ENCODE measurements at regions of chr10 and their contacts with region 1.

Region 1: DNA sequence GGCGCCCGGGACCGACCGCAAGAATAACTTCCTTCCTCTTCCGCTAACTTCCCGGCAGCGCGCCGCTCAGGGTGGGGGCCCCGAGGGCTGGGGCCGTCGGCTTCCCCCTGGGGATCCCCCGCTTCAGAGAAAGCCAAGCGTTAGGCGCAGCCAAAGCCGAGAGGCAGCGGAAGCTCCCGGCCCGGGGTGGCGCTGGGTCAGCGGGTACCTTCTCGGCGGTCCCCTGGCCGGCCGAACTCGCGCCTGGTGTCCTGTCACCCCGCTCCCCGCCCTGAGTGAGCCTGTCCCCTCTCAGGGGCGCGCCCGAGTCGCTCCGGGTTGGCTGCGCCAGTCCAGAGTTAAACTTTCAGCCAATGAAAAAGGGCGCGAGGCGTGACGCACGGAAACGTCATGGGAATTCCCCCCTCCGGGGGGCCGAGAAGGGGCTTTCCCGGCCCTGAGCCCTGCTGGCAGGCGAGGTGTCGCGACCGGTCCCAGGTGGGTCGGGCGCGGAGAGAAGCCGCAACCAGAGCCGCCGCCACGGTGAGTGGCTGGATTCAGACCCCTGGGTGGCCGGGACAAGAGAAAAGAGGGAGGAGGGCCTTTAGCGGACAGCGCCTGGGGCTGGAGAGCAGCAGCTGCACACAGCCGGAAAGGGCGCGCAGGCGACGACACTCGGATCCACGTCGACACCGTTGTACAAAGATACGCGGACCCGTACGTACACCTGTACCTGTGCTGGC is 1.3 kb upstream of the NFKB2 start:
- DNase-seq: peak; percentile 98
- H3K4me3 Mint-ChIP-seq: peak overlapping the region; percentile 92
- H3K27ac Mint-ChIP-seq: peak overlapping the region; percentile 96
- H3K4me1 Mint-ChIP-seq: peaks cover 45% of the 10 kb centered on the region
- H3K27me3 Mint-ChIP-seq: no peaks in the 10 kb centered on the region

Region 2: GRCh38 chr10:102384053-102384452 is 10.2 kb before region 1 on chr10:
- CTCF ChIA-PET with region 1: interaction called, 42 read pairs
- POLR2A ChIA-PET with region 1: no interaction called
- DNase-seq: no peak
- H3K4me3 Mint-ChIP-seq: no peak overlapping the region
- H3K27ac Mint-ChIP-seq: no peak overlapping the region
- H3K4me1 Mint-ChIP-seq: no peaks in the 10 kb centered on the region
- H3K27me3 Mint-ChIP-seq: no peaks in the 10 kb centered on the region

Region 3: DNA sequence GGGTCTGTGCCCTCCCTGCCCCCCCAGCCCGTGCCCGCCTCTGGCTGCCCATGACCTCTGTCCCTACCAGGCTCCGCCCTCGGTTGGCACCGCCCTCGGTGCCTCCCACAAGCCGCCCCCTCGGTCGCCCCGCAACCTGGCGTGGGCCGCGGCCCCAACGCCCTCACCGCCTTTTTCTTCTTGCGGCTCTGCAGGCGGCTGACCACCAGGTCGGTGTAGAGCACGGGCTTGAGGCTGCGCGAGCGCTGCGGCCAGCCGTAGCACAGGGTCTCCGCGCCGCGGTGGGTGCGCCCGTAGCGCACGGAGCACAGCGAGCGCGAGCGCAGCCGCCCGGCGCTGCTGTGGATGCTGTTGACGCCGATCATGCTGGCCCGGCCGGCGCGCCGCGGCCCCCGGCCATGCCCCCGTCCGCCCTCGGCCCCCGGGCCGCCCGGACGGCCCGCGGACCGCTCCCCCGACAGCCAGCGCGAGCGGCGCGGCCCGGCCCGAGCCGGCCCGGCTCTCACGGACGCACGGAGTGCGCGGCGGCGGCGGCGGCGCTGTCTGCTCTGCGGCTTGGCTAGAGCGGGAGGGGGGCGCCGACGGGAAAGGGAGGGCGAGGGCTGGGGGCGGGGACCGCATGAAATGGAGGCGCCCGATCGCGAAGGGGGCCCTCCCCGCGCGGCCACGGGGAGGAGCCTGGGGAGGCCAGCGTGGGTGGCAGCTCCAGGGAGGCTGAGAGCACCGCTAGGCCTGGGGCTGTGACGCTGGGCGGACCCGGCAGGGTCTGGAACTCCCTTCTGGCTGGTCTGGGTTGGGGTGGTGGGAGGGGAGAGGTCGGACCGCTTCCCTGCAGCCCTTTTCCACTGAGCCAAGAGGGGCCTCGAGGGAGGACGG is 14.7 kb after region 1 on chr10:
- CTCF ChIA-PET with region 1: interaction called, 65 read pairs
- POLR2A ChIA-PET with region 1: no interaction called
- DNase-seq: peak; percentile 51
- H3K4me3 Mint-ChIP-seq: peak overlapping the region; percentile 44
- H3K27ac Mint-ChIP-seq: no peak overlapping the region
- H3K4me1 Mint-ChIP-seq: peaks cover 31% of the 10 kb centered on the region
- H3K27me3 Mint-ChIP-seq: peaks cover 24% of the 10 kb centered on the region

Region 4: GRCh38 chr10:102420810-102421644 is 26.8 kb after region 1 on chr10 and contains the start of gene FBXL15:
- CTCF ChIA-PET with region 1: interaction called, 24 read pairs
- POLR2A ChIA-PET with region 1: no interaction called
- DNase-seq: peak; percentile 97
- H3K4me3 Mint-ChIP-seq: peak within 1 kb of the TSS; percentile 90
- H3K27ac Mint-ChIP-seq: peak within 1 kb of the TSS; percentile 95
- H3K4me1 Mint-ChIP-seq: peaks cover 37% of the 10 kb centered on the region
- H3K27me3 Mint-ChIP-seq: peaks cover 18% of the 10 kb centered on the region
- total RNA-seq, gene FBXL15: 8.7 to 11.2 TPM

Region 5: GRCh38 chr10:102432162-102432950 is 38.1 kb after region 1 on chr10 and contains the start of gene CUEDC2:
- CTCF ChIA-PET with region 1: interaction called, 15 read pairs
- POLR2A ChIA-PET with region 1: no interaction called
- DNase-seq: peak; percentile 97
- H3K4me3 Mint-ChIP-seq: peak within 1 kb of the TSS; percentile 94
- H3K27ac Mint-ChIP-seq: peak within 1 kb of the TSS; percentile 95
- H3K4me1 Mint-ChIP-seq: peaks cover 49% of the 10 kb centered on the region
- H3K27me3 Mint-ChIP-seq: no peaks in the 10 kb centered on the region
- total RNA-seq, gene CUEDC2: 63.6 to 68.9 TPM

Region 6: DNA sequence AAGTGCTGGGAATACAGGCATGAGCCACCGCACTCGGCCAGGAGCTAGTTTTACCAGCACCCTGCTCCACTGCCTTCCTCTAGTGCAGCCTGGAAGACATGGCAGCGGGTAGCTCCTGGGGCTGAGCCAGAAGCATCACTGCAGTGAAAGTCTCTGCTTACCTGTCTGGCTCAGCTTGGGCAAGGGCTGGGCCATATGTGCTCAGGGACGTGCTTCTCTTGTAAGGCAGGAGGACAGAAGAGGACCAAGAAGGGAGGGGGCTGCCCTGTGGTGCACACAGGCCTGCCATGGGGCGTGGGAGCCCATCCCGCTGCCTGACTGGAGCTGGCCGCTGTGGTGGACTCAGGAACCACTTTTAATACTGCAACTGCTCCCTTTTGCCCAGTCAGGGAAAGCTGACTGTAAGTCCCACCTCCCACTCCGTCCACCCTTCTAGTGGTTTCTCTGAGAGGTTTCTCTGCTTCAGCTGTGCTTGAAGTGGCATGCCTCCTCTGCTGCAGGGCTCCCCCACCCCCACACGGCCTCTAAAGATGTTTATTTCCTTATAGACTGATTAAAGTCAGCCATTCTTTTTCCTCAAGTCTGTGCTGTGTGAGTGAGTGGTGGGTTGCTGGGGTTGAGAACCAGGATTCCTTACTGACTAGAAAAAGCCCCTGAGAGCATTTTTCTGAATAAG is 82.4 kb after region 1 on chr10:
- CTCF ChIA-PET with region 1: interaction called, 11 read pairs
- POLR2A ChIA-PET with region 1: no interaction called
- DNase-seq: no peak
- H3K4me3 Mint-ChIP-seq: no peak overlapping the region
- H3K27ac Mint-ChIP-seq: peak overlapping the region; percentile 69
- H3K4me1 Mint-ChIP-seq: peaks cover 24% of the 10 kb centered on the region
- H3K27me3 Mint-ChIP-seq: no peaks in the 10 kb centered on the region

Region 7: DNA sequence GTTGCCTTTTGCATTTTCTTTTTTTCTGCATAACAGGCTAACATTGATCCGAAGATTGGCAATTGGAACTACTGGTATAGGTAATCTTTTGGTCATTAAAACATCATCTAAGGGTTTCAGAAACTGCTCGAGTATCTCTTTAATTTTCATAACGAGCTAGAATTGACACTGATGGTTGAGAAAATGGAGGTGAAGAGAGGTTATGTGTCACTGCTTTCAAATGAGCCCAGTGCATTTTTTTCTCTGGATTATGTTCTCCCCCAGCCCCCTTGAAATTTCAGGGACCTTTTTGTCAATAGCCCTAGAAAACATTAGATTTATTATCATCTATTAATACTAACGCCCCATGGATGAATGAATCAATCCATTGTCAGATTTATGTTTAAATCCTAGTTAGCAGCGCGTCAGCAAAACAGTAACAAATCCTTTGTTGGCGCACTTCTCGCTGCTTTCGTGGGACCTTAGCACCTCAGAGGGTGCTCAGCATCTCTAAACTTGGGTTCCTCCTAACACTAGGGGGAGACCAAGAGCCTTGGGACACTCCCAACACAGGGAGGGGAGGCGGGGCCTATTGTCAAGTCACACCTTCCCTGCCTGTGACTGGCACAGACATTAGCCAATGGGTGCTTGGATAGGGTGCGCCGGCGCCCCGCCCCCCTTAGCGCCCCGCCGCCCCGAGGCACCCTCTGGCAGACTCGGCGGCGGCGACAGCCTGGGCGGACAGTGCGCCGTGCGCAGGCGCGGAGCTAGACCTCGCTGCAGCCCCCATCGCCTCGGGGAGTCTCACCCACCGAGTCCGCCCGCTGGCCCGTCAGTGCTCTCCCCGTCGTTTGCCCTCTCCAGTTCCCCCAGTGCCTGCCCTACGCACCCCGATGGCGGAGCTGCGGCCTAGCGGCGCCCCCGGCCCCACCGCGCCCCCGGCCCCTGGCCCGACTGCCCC is 109.3 kb after region 1 on chr10 and contains the start of gene SUFU:
- CTCF ChIA-PET with region 1: interaction called, 13 read pairs
- POLR2A ChIA-PET with region 1: no interaction called
- DNase-seq: peak; percentile 100
- H3K4me3 Mint-ChIP-seq: no peak within 1 kb of the TSS
- H3K27ac Mint-ChIP-seq: peak within 1 kb of the TSS; percentile 87
- H3K4me1 Mint-ChIP-seq: peaks cover 40% of the 10 kb centered on the region
- H3K27me3 Mint-ChIP-seq: no peaks in the 10 kb centered on the region
- total RNA-seq, gene SUFU: 13.4 to 14.2 TPM

Region 8: GRCh38 chr10:102776779-102777456 is 382.7 kb after region 1 on chr10:
- CTCF ChIA-PET with region 1: no interaction called
- POLR2A ChIA-PET with region 1: no interaction called
- DNase-seq: no peak
- H3K4me3 Mint-ChIP-seq: no peak overlapping the region
- H3K27ac Mint-ChIP-seq: no peak overlapping the region
- H3K4me1 Mint-ChIP-seq: peaks cover 53% of the 10 kb centered on the region
- H3K27me3 Mint-ChIP-seq: no peaks in the 10 kb centered on the region

Measured in activated CD4-positive, alpha-beta T cell treated with anti-CD3 and anti-CD28 coated beads, Interleukin-2, amount 10 ng/mL, durations not matched to agents 7 days and 5 days (primary cell).